Heart left ventricle (tissue), 16 donors: ENCODE measurements at regions of chr3 and their contacts with region 1.

Region 1: GRCh38 chr3:184711493-184712247 is at the start of gene MAGEF1:
- DNase-seq: peak; percentile 86 to 92 (median 91)
- ATAC-seq: peak; percentile 95 to 97 (median 95)
- H3K4me3 ChIP-seq: peak within 1 kb of the TSS; percentile 48 to 98 (median 90)
- H3K27ac ChIP-seq: peak within 1 kb of the TSS; percentile 65 to 98 (median 94)
- H3K4me1 ChIP-seq: peaks cover 0 to 49% (median 31%) of the 10 kb centered on the region in 12 donors
- H3K27me3 ChIP-seq: no peaks in the 10 kb centered on the region
- CTCF ChIP-seq: peak in 2 of 12 donors; percentile 6 to 7
- POLR2A ChIP-seq: peak in 1 of 2 donors; percentile 86
- total RNA-seq, gene MAGEF1: 27.1 to 36.4 (median 32.6) TPM

Region 2: DNA sequence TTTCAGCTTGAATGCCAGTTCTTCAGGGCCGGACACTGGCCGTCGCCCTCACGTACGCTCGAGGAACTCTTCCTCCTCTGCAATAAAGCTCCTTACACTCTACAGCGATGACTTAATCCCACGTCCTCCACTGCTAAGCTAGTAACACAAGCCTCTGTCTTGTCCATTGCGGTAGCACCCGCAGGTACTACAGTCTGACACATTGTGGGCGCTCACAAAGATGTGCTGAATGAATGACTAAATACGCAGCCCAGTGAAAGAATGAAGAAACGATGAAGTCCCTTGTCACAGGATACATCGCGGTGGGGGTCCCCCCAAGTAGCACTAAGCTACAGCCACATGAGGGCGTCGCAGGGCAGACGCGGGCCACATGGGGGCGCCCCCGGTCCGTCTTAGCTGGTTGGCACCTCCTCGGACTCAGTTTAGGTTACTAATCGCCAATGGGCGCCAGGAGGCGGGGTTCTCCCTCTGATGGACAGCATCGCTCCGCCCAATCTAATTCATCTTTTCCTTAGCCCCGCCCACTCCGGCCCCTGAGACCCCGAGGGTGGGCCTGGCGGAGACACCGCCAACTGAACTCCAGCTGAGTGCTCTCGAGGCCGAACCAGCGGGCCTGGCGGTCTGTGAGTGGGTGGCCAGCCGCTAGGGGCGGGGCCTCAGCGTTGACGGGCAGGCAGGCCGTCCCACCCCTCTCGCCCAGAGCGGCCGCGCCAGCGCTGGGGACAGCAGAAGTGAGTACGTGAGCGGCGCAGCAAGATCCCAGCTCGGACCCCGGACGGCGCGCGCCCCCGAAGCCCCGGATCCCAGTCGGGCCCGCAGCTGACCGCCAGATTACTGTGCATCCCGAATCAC is 150.4 kb before region 1 on chr3 and contains the start of gene EPHB3:
- intact Hi-C with region 1: loop called in 2 of 10 experiments (anchors 1 to 5 kb)
- DNase-seq: peak; percentile 99 to 100 (median 99)
- ATAC-seq: peak; percentile 96 to 98 (median 98)
- H3K4me3 ChIP-seq: peak within 1 kb of the TSS; percentile 41 to 82 (median 66)
- H3K27ac ChIP-seq: peak within 1 kb of the TSS in 8 of 12 donors; percentile 29 to 73 (median 60)
- H3K4me1 ChIP-seq: peaks cover 0 to 44% (median 22%) of the 10 kb centered on the region in 12 donors
- H3K27me3 ChIP-seq: peaks cover 0 to 25% (median 4%) of the 10 kb centered on the region in 9 donors
- CTCF ChIP-seq: peak; percentile 91 to 100 (median 100)
- POLR2A ChIP-seq: peak; percentile 76 to 95
- total RNA-seq, gene EPHB3: 1.00 to 4.6 (median 2.4) TPM

Region 3: DNA sequence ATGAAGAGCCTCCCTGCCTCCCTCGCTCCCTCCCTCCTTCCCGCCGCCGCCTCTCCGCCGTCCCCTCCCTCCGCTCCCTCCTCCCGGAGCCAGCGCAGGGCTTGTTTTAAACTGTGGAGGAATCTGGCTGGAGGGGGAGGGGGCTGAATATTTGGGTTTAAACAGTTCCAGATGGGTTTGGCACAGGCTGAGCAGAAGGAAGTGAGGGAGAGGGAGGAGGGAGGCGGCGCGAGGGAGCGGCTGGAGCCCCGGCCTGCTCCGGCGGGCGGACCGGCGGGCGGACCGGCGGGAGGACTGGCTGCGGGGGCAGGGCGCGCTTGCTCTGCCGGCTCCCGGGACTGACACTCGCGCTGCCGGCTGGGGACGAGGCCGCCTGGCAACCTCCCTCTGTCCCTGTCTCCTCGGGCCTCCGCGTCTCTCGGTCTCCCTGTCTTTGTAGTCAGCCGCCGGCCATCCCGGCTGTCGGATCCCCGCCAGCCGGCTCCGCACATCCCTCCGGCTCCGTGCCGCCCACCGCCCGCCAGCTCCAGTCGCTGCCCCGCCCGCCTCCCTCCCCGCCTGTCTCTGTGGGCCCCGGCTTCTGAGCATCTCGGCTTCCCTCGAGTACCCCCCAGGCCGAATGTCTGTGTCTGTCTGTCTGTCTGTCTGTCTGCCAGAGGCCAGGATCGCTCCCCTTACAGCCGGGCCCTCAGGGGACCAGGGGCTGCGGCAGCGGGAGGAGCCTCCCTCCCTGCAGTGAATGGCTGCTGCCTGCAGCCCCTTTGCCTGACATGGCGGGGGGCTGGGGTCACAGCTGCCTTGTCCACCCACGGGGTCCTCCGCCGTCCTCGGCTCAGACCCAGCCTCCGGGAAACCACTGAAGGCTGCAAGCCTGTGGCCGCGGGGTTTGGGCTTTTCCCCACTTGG is 142.5 kb before region 1 on chr3:
- intact Hi-C with region 1: loop called in 1 of 10 experiments (anchors 5 kb)
- DNase-seq: peak; percentile 86 to 91 (median 88)
- ATAC-seq: peak; percentile 75 to 90 (median 85)
- H3K4me3 ChIP-seq: peak overlapping the region; percentile 11 to 66 (median 56)
- H3K27ac ChIP-seq: peak overlapping the region in 11 of 12 donors; percentile 49 to 80 (median 70)
- H3K4me1 ChIP-seq: peaks cover 0 to 39% (median 15%) of the 10 kb centered on the region in 12 donors
- H3K27me3 ChIP-seq: peaks cover 0 to 16% (median 0%) of the 10 kb centered on the region in 9 donors
- CTCF ChIP-seq: no peak
- POLR2A ChIP-seq: peak in 1 of 2 donors; percentile 20

Region 4: DNA sequence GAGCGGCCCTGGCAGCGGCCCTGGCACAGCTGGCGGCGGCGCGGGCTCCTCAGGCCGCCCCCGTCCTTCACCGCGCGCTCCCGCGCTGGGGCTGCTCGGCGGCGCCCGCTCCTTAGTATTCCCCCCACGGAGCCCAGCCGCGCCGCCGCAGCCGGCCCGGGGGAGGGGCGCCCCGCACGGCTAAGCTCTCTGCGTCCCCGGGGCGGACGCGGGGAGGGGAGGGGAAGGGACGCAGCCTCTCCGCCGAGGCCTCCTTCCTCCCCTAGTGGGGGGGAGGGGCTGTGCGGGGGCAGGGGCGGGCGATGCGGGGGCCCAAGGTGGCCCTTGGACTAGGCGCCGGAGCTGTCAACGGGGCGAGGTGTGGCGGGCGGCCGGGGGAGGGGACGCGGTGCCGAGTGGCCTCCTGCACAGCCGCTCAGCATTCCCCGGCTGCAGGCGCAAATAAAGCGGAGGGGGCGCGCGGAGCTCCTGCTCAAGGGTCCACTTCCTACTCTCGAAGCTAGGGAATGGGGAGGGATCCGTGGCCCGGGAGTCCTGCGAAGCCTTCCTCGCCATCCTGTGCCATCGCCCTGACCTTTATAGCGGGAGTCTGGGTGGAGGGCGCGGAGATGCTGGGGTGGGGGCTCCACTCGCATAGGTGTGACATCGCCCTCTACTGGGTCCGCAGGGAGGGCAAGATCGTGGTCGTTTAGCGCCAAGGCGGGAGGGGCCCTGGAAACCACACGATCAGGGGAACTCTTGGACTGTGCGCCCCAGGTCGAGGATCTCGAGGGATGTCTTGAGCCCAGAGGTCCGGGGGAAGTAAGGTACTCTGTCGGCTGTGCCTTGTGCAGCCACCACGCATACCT is 127.9 kb before region 1 on chr3:
- intact Hi-C with region 1: loop called in 3 of 10 experiments (anchors 5 kb)
- DNase-seq: peak; percentile 54 to 80 (median 70)
- ATAC-seq: peak; percentile 32 to 75 (median 72)
- H3K4me3 ChIP-seq: peak overlapping the region; percentile 30 to 77 (median 64)
- H3K27ac ChIP-seq: peak overlapping the region in 11 of 12 donors; percentile 73 to 89 (median 84)
- H3K4me1 ChIP-seq: peaks cover 0 to 36% (median 10%) of the 10 kb centered on the region in 12 donors
- H3K27me3 ChIP-seq: peaks cover 0 to 20% (median 0%) of the 10 kb centered on the region in 9 donors
- CTCF ChIP-seq: peak in 5 of 12 donors; percentile 22 to 47 (median 30)
- POLR2A ChIP-seq: no peak

Region 5: GRCh38 chr3:184604039-184604601 is 107.5 kb before region 1 on chr3:
- intact Hi-C with region 1: loop called in 1 of 10 experiments (anchors 5 kb)
- DNase-seq: peak in 3 of 5 donors; percentile 47 to 70 (median 62)
- ATAC-seq: peak in 3 of 4 donors; percentile 36 to 72 (median 50)
- H3K4me3 ChIP-seq: peak overlapping the region; percentile 10 to 61 (median 52)
- H3K27ac ChIP-seq: peak overlapping the region in 6 of 12 donors; percentile 1 to 73 (median 42)
- H3K4me1 ChIP-seq: peaks cover 0 to 35% (median 20%) of the 10 kb centered on the region in 12 donors
- H3K27me3 ChIP-seq: peaks cover 0 to 46% (median 0%) of the 10 kb centered on the region in 9 donors
- CTCF ChIP-seq: peak in 4 of 12 donors; percentile 6 to 27 (median 18)
- POLR2A ChIP-seq: no peak